ENCODE measurements at regions of chr2 and their contacts with region 1.

Region 1: GRCh38 chr2:84925724-84926376 is 20.4 kb downstream of the TMSB10 start:
- DNase-seq: peak; percentile 97
- ATAC-seq: peak; percentile 86
- H3K4me3 ChIP-seq: peak overlapping the region; percentile 48 to 83 (median 74)
- H3K4me3 Mint-ChIP-seq: peak overlapping the region; percentile 96
- H3K27ac ChIP-seq: peak overlapping the region in 1 of 2 donors; percentile 35
- H3K27ac Mint-ChIP-seq: peak overlapping the region; percentile 91
- H3K4me1 ChIP-seq: peaks cover 26 to 49% of the 10 kb centered on the region in 2 donors
- H3K4me1 Mint-ChIP-seq: peaks cover 50% of the 10 kb centered on the region
- H3K27me3 ChIP-seq: no peaks in the 10 kb centered on the region
- H3K27me3 Mint-ChIP-seq: no peaks in the 10 kb centered on the region
- CTCF ChIP-seq: peak; percentile 100

Region 2: DNA sequence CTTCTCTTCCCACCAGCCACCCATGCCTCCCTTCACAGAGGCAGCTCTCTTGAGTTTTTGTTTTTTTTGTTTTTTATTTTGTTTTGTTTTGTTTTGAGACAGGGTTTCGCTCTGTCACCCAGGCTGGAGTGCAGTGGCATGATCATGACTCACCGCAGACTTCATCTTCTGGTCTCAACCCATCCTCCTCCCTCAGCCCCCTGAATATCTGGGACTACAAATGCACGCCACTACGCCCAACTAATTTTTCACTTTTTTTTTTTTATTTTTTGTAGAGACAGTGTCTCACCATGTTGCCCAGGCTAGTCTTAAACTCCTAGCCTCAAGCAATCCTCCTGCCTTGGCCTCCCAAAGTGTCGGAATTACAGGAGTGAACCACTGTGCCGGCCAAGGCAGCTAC is 206.4 kb before region 1 on chr2:
- CTCF ChIA-PET with region 1: no interaction called
- POLR2A ChIA-PET with region 1: no interaction called
- intact Hi-C with region 1: no loop called
- DNase-seq: no peak
- ATAC-seq: no peak
- H3K4me3 ChIP-seq: no peak overlapping the region
- H3K4me3 Mint-ChIP-seq: no peak overlapping the region
- H3K27ac ChIP-seq: no peak overlapping the region
- H3K27ac Mint-ChIP-seq: no peak overlapping the region
- H3K4me1 ChIP-seq: no peaks in the 10 kb centered on the region
- H3K4me1 Mint-ChIP-seq: no peaks in the 10 kb centered on the region
- H3K27me3 ChIP-seq: peaks cover 0 to 2% (median 0%) of the 10 kb centered on the region in 4 experiments
- H3K27me3 Mint-ChIP-seq: peaks cover 4% of the 10 kb centered on the region
- CTCF ChIP-seq: no peak

Region 3: GRCh38 chr2:84741296-84741765 is 184.5 kb before region 1 on chr2:
- CTCF ChIA-PET with region 1: interaction called, 12 read pairs
- POLR2A ChIA-PET with region 1: interaction called, 3 read pairs
- intact Hi-C with region 1: no loop called
- DNase-seq: peak; percentile 52
- ATAC-seq: peak; percentile 77
- H3K4me3 ChIP-seq: no peak overlapping the region
- H3K4me3 Mint-ChIP-seq: no peak overlapping the region
- H3K27ac ChIP-seq: no peak overlapping the region
- H3K27ac Mint-ChIP-seq: no peak overlapping the region
- H3K4me1 ChIP-seq: peaks cover 3 to 8% of the 10 kb centered on the region in 2 donors
- H3K4me1 Mint-ChIP-seq: peaks cover 3% of the 10 kb centered on the region
- H3K27me3 ChIP-seq: peaks cover 0 to 10% (median 4%) of the 10 kb centered on the region in 4 experiments
- H3K27me3 Mint-ChIP-seq: peaks cover 40% of the 10 kb centered on the region
- CTCF ChIP-seq: peak; percentile 41

Region 4: GRCh38 chr2:84870306-84870705 is 55.5 kb before region 1 on chr2:
- CTCF ChIA-PET with region 1: interaction called, 316 read pairs
- POLR2A ChIA-PET with region 1: no interaction called
- intact Hi-C with region 1: no loop called
- DNase-seq: peak; percentile 56
- ATAC-seq: peak; percentile 75
- H3K4me3 ChIP-seq: no peak overlapping the region
- H3K4me3 Mint-ChIP-seq: no peak overlapping the region
- H3K27ac ChIP-seq: no peak overlapping the region
- H3K27ac Mint-ChIP-seq: no peak overlapping the region
- H3K4me1 ChIP-seq: peaks cover 0 to 6% of the 10 kb centered on the region in 2 donors
- H3K4me1 Mint-ChIP-seq: peaks cover 5% of the 10 kb centered on the region
- H3K27me3 ChIP-seq: no peaks in the 10 kb centered on the region
- H3K27me3 Mint-ChIP-seq: peaks cover 3% of the 10 kb centered on the region
- CTCF ChIP-seq: no peak

Region 5: GRCh38 chr2:84905181-84906107 is 20.4 kb before region 1 on chr2 and contains the start of gene TMSB10:
- CTCF ChIA-PET with region 1: interaction called, 159 read pairs
- POLR2A ChIA-PET with region 1: interaction called, 129 read pairs
- intact Hi-C with region 1: loop called (anchors 1 kb)
- DNase-seq: peak; percentile 94
- ATAC-seq: peak; percentile 84
- H3K4me3 ChIP-seq: peak within 1 kb of the TSS; percentile 67 to 98 (median 93)
- H3K4me3 Mint-ChIP-seq: peak within 1 kb of the TSS; percentile 87
- H3K27ac ChIP-seq: peak within 1 kb of the TSS; percentile 77 to 83
- H3K27ac Mint-ChIP-seq: peak within 1 kb of the TSS; percentile 94
- H3K4me1 ChIP-seq: peaks cover 41 to 46% of the 10 kb centered on the region in 2 donors
- H3K4me1 Mint-ChIP-seq: peaks cover 60% of the 10 kb centered on the region
- H3K27me3 ChIP-seq: no peaks in the 10 kb centered on the region
- H3K27me3 Mint-ChIP-seq: no peaks in the 10 kb centered on the region
- CTCF ChIP-seq: peak; percentile 6
- total RNA-seq, gene TMSB10: 868 and 885 TPM in 2 replicates

Region 6: GRCh38 chr2:84946204-84947009 is 20.6 kb after region 1 on chr2:
- CTCF ChIA-PET with region 1: interaction called, 168 read pairs
- POLR2A ChIA-PET with region 1: interaction called, 25 read pairs
- intact Hi-C with region 1: loop called (anchors 1 kb)
- DNase-seq: peak; percentile 83
- ATAC-seq: peak; percentile 86
- H3K4me3 ChIP-seq: peak overlapping the region in 4 of 5 experiments; percentile 14 to 48 (median 32)
- H3K4me3 Mint-ChIP-seq: peak overlapping the region; percentile 79
- H3K27ac ChIP-seq: peak overlapping the region; percentile 78 to 87
- H3K27ac Mint-ChIP-seq: peak overlapping the region; percentile 93
- H3K4me1 ChIP-seq: peaks cover 44 to 55% of the 10 kb centered on the region in 2 donors
- H3K4me1 Mint-ChIP-seq: peaks cover 45% of the 10 kb centered on the region
- H3K27me3 ChIP-seq: no peaks in the 10 kb centered on the region
- H3K27me3 Mint-ChIP-seq: no peaks in the 10 kb centered on the region
- CTCF ChIP-seq: no peak

Region 7: DNA sequence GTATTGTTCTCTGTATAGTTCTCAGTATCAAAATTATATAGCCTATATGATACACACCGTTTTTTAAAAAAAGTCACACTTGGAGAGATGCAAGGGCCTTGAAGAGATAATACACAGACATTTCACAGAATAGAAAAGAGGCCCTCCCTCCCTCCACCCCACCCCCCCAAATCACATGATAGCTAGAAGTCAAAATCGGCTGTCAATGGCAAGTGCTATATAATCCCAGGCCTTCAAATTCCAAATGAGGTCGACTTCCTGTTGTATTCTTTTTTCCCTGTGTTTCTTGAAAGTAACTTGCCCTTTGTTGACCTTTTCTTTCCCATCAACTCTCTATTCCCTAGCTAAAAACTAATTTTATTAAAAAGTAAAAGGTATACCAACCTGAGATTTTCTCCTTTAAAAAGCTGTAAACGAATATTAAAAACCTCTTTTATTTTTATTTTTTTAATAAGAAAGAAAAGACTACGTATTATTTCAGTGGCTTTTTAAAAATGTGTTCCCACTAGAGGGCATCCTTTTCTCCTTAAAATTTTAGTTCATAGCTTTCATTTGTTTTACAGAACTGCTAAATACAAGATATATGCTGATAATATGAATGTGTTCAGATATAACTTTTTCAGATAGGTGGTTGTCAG is 91.7 kb after region 1 on chr2:
- CTCF ChIA-PET with region 1: interaction called, 4 read pairs
- POLR2A ChIA-PET with region 1: no interaction called
- intact Hi-C with region 1: loop called (anchors 1 kb)
- DNase-seq: no peak
- ATAC-seq: no peak
- H3K4me3 ChIP-seq: no peak overlapping the region
- H3K4me3 Mint-ChIP-seq: no peak overlapping the region
- H3K27ac ChIP-seq: no peak overlapping the region
- H3K27ac Mint-ChIP-seq: peak overlapping the region; percentile 37
- H3K4me1 ChIP-seq: peaks cover 26 to 37% of the 10 kb centered on the region in 2 donors
- H3K4me1 Mint-ChIP-seq: peaks cover 61% of the 10 kb centered on the region
- H3K27me3 ChIP-seq: no peaks in the 10 kb centered on the region
- H3K27me3 Mint-ChIP-seq: no peaks in the 10 kb centered on the region
- CTCF ChIP-seq: peak; percentile 61

Region 8: DNA sequence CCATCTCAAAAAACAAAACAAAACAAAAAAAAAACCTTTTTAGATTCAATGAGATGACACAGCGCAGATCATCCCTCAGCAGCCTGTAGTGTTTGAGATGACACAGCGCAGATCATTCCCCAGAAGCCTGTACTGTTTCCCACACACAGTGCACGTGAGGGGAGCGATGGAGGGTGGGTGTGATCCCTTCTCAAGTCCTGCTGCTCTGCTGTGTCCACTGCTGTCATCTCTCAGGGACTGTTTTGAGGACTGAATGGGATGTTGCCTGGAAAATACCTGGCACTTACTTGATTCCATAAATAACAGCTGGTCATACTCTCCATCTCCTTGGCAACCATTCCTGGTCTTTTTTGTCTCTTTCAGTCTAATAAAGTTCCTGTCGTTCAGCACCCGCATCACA is 376.3 kb after region 1 on chr2:
- CTCF ChIA-PET with region 1: interaction called, 15 read pairs
- POLR2A ChIA-PET with region 1: no interaction called
- intact Hi-C with region 1: loop called (anchors 2 kb)
- DNase-seq: no peak
- ATAC-seq: no peak
- H3K4me3 ChIP-seq: no peak overlapping the region
- H3K4me3 Mint-ChIP-seq: no peak overlapping the region
- H3K27ac ChIP-seq: no peak overlapping the region
- H3K27ac Mint-ChIP-seq: no peak overlapping the region
- H3K4me1 ChIP-seq: peaks cover 0 to 3% of the 10 kb centered on the region in 2 donors
- H3K4me1 Mint-ChIP-seq: peaks cover 8% of the 10 kb centered on the region
- H3K27me3 ChIP-seq: peaks cover 0 to 14% (median 3%) of the 10 kb centered on the region in 4 experiments
- H3K27me3 Mint-ChIP-seq: peaks cover 29% of the 10 kb centered on the region
- CTCF ChIP-seq: no peak